Heart right ventricle (tissue), 16 donors: ENCODE measurements at regions of chr20 and their contacts with region 1.

Region 1: DNA sequence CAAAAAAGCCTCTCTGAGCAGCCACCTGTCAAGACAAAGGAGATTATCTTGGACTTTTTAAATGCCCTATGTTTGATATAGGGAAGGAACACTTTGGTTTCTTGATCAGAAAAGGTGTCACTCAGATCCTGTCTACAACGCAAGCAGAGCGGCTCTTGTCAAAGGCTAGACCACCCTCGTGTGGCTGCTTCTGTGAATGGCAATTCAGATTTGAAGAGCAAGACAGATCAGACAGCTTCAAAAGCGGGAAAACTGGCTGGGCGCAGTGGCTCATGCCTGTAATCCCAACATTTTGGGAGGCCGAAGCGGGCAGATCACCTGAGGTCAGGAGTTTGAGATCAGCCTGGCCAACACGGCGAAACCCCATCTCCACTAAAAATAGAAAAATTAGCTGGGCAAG is 10.1 kb upstream of the NXT1 start:
- DNase-seq: peak; percentile 41 to 80
- ATAC-seq: peak; percentile 68 to 92 (median 88)
- H3K4me3 ChIP-seq: no peak overlapping the region
- H3K27ac ChIP-seq: no peak overlapping the region
- H3K4me1 ChIP-seq: peaks cover 0 to 10% (median 0%) of the 10 kb centered on the region in 9 donors
- H3K27me3 ChIP-seq: no peaks in the 10 kb centered on the region
- CTCF ChIP-seq: peak; percentile 55 to 89 (median 75)

Region 2: GRCh38 chr20:22333885-22334545 is 1006.5 kb before region 1 on chr20:
- intact Hi-C with region 1: loop called in 3 of 10 experiments (anchors 5 to 10 kb)
- DNase-seq: peak; percentile 18 to 19
- ATAC-seq: peak in 5 of 8 donors; percentile 49 to 82 (median 62)
- H3K4me3 ChIP-seq: no peak overlapping the region
- H3K27ac ChIP-seq: no peak overlapping the region
- H3K4me1 ChIP-seq: peaks cover 0 to 1% (median 0%) of the 10 kb centered on the region in 9 donors
- H3K27me3 ChIP-seq: peaks cover 0 to 95% (median 39%) of the 10 kb centered on the region in 7 donors
- CTCF ChIP-seq: peak in 8 of 9 donors; percentile 44 to 76 (median 70)

Region 3: GRCh38 chr20:22339091-22339881 is 1001.2 kb before region 1 on chr20:
- intact Hi-C with region 1: loop called in 4 of 10 experiments (anchors 5 to 10 kb)
- DNase-seq: peak in 1 of 2 donors; percentile 44
- ATAC-seq: peak in 6 of 8 donors; percentile 23 to 62 (median 50)
- H3K4me3 ChIP-seq: no peak overlapping the region
- H3K27ac ChIP-seq: no peak overlapping the region
- H3K4me1 ChIP-seq: peaks cover 0 to 6% (median 0%) of the 10 kb centered on the region in 9 donors
- H3K27me3 ChIP-seq: peaks cover 0 to 63% (median 25%) of the 10 kb centered on the region in 7 donors
- CTCF ChIP-seq: peak; percentile 19 to 82 (median 76)

Region 4: DNA sequence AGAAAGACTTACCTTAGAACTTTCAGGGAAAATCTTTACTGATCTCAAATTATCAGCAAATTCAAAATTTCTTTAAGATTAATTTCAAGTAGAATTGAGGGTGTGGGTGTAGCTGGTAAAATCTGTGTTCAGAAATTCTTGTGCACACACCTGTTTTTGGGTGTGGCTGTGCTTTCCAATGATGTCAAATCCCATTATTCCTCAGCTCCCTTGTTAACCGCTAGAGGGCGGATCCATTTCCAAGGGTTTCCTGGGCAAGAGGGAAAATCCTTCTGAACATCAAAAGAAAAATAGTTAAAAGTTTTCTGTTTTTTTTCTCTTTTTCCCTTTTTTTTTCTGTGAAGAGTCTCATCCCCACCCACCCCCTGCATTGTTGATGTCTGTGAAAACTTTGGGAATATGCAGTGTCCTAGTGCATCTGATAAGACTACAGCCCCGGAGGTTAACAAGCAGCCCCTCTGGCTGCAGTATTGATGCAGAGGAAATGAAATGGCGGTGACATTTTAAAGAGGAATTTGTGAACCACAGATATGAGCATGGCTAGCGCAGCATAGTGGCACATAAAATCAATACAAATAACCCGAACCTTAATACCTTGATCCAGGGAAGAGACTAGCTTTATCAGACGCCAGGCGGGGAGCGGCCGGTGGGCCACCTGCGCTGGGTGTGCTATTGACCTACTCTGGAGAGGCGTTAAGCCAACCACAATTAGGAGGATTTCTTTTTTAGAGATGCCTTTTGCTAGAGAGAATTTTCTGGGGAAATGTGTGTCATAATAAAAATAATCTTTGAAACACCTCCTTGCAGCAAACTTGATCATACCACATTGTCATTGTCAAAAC is 887.1 kb before region 1 on chr20:
- intact Hi-C with region 1: loop called in 1 of 10 experiments (anchors 5 kb)
- DNase-seq: no peak
- ATAC-seq: no peak
- H3K4me3 ChIP-seq: no peak overlapping the region
- H3K27ac ChIP-seq: no peak overlapping the region
- H3K4me1 ChIP-seq: no peaks in the 10 kb centered on the region
- H3K27me3 ChIP-seq: peaks cover 0 to 90% (median 43%) of the 10 kb centered on the region in 7 donors
- CTCF ChIP-seq: peak in 8 of 9 donors; percentile 20 to 69 (median 56)

Region 5: DNA sequence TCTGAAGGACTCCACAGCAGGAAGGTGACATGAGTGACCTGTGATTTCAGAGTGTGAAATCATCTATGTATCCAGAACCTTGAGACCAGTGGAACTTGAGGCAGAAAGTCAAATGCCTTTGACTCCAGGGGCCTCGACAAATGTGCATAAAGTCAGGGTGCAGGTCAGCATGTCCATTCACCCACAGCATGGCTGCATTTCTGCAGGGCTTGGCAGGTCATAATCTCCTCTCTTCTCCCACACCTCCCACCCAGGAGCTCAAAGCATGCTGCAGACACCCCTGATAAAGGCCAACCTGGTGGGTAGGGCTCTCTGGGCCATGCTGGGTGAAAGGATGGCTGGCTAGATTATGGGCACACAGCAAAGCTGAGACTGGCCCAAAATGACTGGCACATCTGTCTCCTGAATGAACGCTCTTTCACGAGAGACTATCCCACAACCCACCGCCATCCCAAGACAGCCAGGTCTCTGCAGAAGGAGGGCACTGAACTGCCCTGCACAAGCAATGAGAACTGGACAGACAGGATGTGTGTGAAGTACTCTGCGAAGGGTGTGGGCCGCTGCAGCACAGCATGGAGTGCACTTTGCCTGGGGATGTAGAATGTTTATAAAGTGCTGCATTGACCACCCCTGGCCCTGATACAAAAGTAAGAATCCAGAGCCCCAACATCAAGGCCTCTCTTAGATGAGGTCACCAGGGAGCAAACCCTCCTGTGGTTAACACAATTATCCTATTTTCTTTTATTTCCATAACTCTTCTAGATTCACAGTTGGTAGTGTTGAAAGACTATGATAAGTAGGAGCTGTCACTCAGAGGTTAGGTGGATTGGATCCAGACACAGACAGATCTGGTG is 68.1 kb before region 1 on chr20:
- intact Hi-C with region 1: no loop called
- DNase-seq: no peak
- ATAC-seq: no peak
- H3K4me3 ChIP-seq: no peak overlapping the region
- H3K27ac ChIP-seq: no peak overlapping the region
- H3K4me1 ChIP-seq: peaks cover 5 to 26% (median 15%) of the 10 kb centered on the region in 9 donors
- H3K27me3 ChIP-seq: no peaks in the 10 kb centered on the region
- CTCF ChIP-seq: no peak